B cell (primary cell): ENCODE measurements at regions of chr20 and their contacts with region 1.

Region 1: GRCh38 chr20:48904365-48905296 is 16.9 kb upstream of the ARFGEF2 start:
- DNase-seq: peak; percentile 81
- ATAC-seq: peak; percentile 78
- H3K4me3 ChIP-seq: no peak overlapping the region
- H3K4me3 Mint-ChIP-seq: peak overlapping the region; percentile 19
- H3K27ac ChIP-seq: no peak overlapping the region
- H3K27ac Mint-ChIP-seq: no peak overlapping the region
- H3K4me1 ChIP-seq: peaks cover 6 to 7% of the 10 kb centered on the region in 2 donors
- H3K4me1 Mint-ChIP-seq: peaks cover 10% of the 10 kb centered on the region
- H3K27me3 ChIP-seq: no peaks in the 10 kb centered on the region
- H3K27me3 Mint-ChIP-seq: no peaks in the 10 kb centered on the region
- CTCF ChIP-seq: peak; percentile 90

Region 2: DNA sequence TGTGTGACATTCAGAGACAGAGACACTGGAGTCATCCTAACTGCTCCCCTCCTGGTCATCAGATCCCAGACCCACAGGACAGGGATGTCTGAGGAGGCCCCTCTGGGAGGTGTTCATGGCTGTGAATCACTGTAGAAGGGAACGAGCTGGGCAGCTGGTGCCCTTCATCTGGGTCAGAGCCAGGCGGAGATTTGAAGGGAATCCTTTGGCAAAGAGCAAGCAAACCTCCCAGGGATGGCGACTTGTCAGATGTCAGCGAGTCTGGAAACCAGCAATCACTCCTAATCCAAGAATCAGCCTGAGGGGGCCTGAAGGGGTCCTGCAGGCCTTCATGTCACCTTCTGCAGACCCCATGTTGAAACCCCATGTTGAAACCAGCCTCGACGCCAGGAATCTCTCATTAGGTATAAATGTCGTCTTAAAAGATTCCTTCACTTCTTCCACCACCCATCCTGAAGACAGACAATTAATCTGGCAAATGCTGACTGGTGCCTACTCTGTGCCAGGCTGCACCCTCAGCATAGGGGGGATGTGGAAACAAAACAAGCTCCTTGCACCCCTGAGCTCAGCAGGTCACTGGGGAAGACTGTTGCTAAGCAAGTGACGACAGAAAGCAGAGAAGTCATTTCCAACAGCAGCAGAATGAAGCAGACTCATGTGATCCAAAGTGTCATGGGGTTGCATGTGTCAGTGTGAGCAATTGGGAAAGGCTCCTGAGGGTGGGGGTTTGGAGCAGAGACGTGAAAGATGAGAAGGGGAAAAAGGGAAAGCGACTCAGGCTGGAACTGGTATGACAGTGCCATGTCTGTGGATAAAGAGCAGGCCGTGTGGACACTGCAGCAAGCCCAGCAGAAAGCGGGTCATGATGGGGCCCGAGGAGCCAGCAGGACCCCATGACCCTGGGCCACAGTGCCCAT is 441.0 kb before region 1 on chr20:
- CTCF ChIA-PET with region 1: no interaction called
- POLR2A ChIA-PET with region 1: no interaction called
- intact Hi-C with region 1: no loop called
- DNase-seq: no peak
- ATAC-seq: no peak
- H3K4me3 ChIP-seq: no peak overlapping the region
- H3K4me3 Mint-ChIP-seq: no peak overlapping the region
- H3K27ac ChIP-seq: no peak overlapping the region
- H3K27ac Mint-ChIP-seq: no peak overlapping the region
- H3K4me1 ChIP-seq: peaks cover 0 to 8% of the 10 kb centered on the region in 2 donors
- H3K4me1 Mint-ChIP-seq: peaks cover 16% of the 10 kb centered on the region
- H3K27me3 ChIP-seq: peaks cover 0 to 5% (median 0%) of the 10 kb centered on the region in 4 experiments
- H3K27me3 Mint-ChIP-seq: peaks cover 12% of the 10 kb centered on the region
- CTCF ChIP-seq: no peak

Region 3: DNA sequence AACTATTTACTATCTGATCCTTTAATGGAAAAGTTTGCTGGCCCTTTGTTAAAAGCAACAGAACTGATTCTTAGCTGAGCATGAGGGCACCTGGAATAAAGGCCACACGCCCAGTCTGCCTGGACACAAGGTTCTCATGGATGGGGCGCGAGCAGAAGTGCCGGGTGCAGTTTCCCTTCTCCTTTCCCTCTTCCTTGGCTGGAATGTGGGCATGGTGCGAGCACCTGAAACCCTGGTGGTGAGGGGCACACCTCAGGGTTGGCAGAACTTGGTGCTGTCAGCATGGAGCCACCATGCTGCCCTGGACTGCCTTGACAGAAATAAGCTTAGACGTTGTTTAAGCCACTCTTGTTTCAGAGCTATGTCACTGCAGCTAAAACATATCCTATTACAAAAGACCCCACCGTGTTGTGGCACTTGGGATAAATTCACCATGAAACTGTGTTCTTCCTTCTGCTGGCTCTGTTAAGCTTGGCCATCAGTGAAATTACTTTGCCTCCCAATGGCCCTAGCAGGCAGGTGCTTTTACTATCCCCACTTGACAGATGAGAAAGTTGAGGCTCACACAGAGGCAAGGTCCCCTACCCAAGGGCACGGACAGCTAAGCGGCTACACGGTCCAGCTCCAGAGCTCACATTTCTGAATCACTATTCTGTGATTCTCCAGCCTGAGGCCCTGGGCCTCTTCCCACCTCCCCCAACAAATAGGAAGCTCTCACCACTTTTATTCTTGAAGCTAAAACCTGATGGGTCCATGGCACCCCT is 192.8 kb before region 1 on chr20:
- CTCF ChIA-PET with region 1: interaction called, 11 read pairs
- POLR2A ChIA-PET with region 1: no interaction called
- intact Hi-C with region 1: no loop called
- DNase-seq: no peak
- ATAC-seq: no peak
- H3K4me3 ChIP-seq: peak overlapping the region in 1 of 5 experiments; percentile 14
- H3K4me3 Mint-ChIP-seq: peak overlapping the region; percentile 55
- H3K27ac ChIP-seq: peak overlapping the region; percentile 45 to 68
- H3K27ac Mint-ChIP-seq: peak overlapping the region; percentile 85
- H3K4me1 ChIP-seq: peaks cover 41 to 78% of the 10 kb centered on the region in 2 donors
- H3K4me1 Mint-ChIP-seq: peaks cover 70% of the 10 kb centered on the region
- H3K27me3 ChIP-seq: no peaks in the 10 kb centered on the region
- H3K27me3 Mint-ChIP-seq: no peaks in the 10 kb centered on the region
- CTCF ChIP-seq: no peak